ENCODE measurements at regions of chr6 and their contacts with region 1.

Region 1: DNA sequence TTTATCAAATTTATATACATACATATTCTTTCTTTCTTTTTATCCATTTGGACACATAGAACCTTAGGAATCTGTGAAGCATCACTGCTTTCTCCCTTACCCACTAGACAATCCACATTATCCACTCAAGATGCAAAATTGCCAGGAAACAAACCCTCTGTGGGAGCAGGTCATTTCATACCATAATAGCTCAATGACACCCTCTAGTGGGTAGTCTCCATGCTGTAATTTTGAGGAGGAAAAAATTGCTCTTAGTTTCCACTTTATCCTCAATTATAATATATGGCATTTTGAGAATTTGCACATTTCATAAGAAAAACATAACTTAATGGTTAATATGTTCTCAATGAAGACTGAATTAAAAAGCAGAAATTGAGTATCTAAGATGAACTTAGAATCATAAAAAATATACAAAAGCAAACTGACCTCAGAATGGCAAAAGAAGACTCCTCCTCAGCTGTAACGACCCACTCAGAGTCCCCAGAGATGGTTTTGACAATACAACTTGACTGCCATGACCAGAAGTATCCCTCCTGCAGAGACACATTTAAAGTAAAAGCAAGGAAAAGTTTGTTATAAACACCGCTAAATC is 164.1 kb downstream of the FRK start:
- DNase-seq: no peak

Region 2: DNA sequence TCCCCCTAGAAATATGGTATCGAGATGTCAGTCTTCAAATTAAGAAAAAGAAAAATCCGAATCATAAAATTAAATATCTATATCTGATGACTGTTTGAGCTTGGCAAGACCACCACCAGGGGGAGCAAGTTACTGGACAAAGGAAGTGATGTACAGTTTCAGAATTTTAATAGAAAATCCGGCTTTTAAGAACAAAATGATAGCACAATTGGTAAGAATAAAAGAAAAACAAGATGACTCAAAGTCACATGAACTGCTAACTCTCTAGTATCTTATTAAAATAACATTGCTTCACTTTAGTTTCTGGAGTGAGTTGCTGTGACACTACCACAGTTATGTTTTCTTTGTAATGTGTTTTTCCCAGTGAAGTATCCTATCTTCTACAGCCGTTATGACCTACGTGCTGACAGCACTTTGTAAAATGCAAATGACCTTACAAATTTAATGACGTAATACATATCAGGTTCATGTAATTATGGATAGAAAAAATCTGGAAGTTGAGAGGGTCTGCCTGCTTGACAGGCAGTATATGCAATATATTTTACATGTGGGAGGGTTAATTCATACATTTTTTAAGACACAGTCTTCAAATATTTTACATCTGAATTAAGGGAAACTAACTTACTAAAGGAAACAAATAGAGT is 1148.5 kb before region 1 on chr6:
- intact Hi-C with region 1: loop called (anchors 10 kb)
- DNase-seq: no peak

Measured in cardiac septum (tissue), 1 donor.